GM10248 (cell line): ENCODE measurements at regions of chr17 and their contacts with region 1.

Region 1: GRCh38 chr17:64073771-64074703 is 53.6 kb upstream of the ICAM2 start:
- DNase-seq: peak; percentile 71
- CTCF ChIP-seq: no peak

Region 2: GRCh38 chr17:64056269-64057005 is 17.6 kb before region 1 on chr17:
- CTCF ChIA-PET with region 1: interaction called, 57 read pairs
- POLR2A ChIA-PET with region 1: interaction called, 4 read pairs
- DNase-seq: peak; percentile 84
- CTCF ChIP-seq: peak; percentile 20

Region 3: GRCh38 chr17:64117981-64118979 is 44.2 kb after region 1 on chr17:
- CTCF ChIA-PET with region 1: interaction called, 10 read pairs
- POLR2A ChIA-PET with region 1: interaction called, 3 read pairs
- DNase-seq: no peak
- CTCF ChIP-seq: no peak